ENCODE measurements at regions of chr2 and their contacts with region 1.

Region 1: DNA sequence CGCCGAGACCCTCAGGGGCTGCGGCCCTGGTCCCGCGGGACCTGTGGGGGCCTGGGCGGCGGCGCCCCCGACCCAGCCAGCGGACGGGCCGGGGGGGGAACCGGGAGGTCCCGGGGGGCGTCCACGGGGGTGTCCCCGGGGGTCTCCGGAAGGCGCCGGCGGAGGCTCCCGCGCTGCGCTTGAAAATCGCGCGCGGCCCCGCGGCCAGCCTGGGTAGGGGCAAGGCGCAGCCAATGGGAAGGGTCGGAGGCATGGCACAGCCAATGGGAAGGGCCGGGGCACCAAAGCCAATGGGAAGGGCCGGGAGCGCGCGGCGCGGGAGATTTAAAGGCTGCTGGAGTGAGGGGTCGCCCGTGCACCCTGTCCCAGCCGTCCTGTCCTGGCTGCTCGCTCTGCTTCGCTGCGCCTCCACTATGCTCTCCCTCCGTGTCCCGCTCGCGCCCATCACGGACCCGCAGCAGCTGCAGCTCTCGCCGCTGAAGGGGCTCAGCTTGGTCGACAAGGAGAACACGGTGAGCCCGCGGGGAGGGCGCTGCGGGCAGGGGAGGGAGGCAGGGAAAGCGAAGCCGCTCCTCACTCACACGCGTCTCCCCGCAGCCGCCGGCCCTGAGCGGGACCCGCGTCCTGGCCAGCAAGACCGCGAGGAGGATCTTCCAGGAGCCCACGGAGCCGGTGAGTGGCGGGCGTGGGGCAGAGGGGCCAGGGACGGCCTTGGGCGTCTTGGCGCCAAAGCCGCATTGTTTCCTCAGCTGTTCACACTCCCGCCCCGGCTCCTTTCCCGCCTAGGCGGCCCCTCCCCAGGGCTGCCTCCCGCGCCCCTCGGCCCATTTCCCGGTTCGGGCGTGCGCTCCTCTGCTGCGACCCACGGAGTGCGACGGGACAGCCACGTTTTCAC is at the start of gene RRM2:
- DNase-seq: peak; percentile 89 to 90
- ATAC-seq: peak; percentile 84 to 88
- H3K4me3 ChIP-seq: peak within 1 kb of the TSS; percentile 34 to 72 (median 60)
- H3K27ac ChIP-seq: no peak within 1 kb of the TSS
- H3K4me1 ChIP-seq: peaks cover 15 to 19% of the 10 kb centered on the region in 2 donors
- H3K27me3 ChIP-seq: peaks cover 12 to 14% (median 14%) of the 10 kb centered on the region in 3 donors
- CTCF ChIP-seq: no peak
- POLR2A ChIP-seq: no peak
- total RNA-seq, gene RRM2: 2.0 TPM in 1 of 4 donors, not detected in the others

Region 2: GRCh38 chr2:9578467-9579235 is 544.0 kb before region 1 on chr2:
- in situ Hi-C with region 1: no loop called
- intact Hi-C with region 1: no loop called
- DNase-seq: no peak
- ATAC-seq: no peak
- H3K4me3 ChIP-seq: no peak overlapping the region
- H3K27ac ChIP-seq: no peak overlapping the region
- H3K4me1 ChIP-seq: no peaks in the 10 kb centered on the region
- H3K27me3 ChIP-seq: no peaks in the 10 kb centered on the region
- CTCF ChIP-seq: no peak
- POLR2A ChIP-seq: no peak

Region 3: GRCh38 chr2:9951272-9951972 is 171.2 kb before region 1 on chr2 and contains the start of gene GRHL1:
- in situ Hi-C with region 1: no loop called
- intact Hi-C with region 1: loop called (anchors 1 kb)
- DNase-seq: peak; percentile 84 to 87
- ATAC-seq: peak; percentile 93 to 96
- H3K4me3 ChIP-seq: peak within 1 kb of the TSS; percentile 58 to 84 (median 73)
- H3K27ac ChIP-seq: peak within 1 kb of the TSS; percentile 71 to 90 (median 77)
- H3K4me1 ChIP-seq: peaks cover 0 to 5% of the 10 kb centered on the region in 2 donors
- H3K27me3 ChIP-seq: peaks cover 0 to 2% (median 0%) of the 10 kb centered on the region in 3 donors
- CTCF ChIP-seq: peak in 1 of 5 experiments; percentile 24
- POLR2A ChIP-seq: peak; percentile 39 to 60
- total RNA-seq, gene GRHL1: 0.29 to 1.0 (median 0.75) TPM

Region 4: DNA sequence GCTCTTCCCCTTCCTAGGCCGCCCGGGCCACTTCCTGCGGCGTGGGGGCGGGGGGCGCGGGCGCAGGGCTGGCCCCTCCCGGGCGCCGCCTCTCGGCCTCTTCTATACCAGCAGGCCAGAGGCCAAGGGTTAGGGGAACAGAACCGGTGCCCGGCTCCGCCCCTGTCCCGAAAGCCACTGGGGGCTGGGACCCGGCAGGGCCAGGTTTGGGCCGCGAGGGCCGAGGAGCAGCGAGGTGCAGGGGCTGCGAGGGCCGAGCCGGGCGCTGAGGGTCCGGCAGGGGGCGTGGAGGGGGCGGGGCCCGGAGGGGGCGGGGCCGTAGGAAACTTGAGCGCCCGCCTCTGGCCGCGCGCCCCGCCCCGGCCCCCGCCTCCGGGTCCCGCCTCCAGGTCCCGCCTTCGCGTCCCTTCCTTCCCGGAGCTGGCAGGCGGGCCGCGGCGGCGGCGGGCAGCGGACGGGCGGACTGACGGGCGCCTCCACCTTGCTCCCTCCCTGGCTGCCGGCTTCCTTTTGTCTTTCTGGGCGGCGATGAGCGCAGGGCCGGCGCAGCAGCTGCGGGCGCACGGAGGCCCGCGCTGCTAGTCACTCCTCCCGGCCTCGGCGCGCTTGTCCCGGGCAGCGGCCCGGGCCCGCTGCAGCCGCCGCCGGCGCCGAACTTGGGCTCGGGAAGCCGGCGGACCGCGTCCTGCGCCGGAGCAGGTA is 180.0 kb after region 1 on chr2 and contains the start of gene HPCAL1:
- in situ Hi-C with region 1: no loop called
- intact Hi-C with region 1: loop called (anchors 5 kb)
- DNase-seq: peak; percentile 63 to 73
- ATAC-seq: peak; percentile 83 to 86
- H3K4me3 ChIP-seq: peak within 1 kb of the TSS; percentile 63 to 86 (median 78)
- H3K27ac ChIP-seq: peak within 1 kb of the TSS; percentile 60 to 79 (median 75)
- H3K4me1 ChIP-seq: peaks cover 18 to 22% of the 10 kb centered on the region in 2 donors
- H3K27me3 ChIP-seq: no peaks in the 10 kb centered on the region
- CTCF ChIP-seq: peak in 4 of 5 experiments; percentile 33 to 64 (median 44)
- POLR2A ChIP-seq: peak; percentile 84 to 89
- total RNA-seq, gene HPCAL1: 29.0 to 45.5 (median 34.5) TPM

Region 5: DNA sequence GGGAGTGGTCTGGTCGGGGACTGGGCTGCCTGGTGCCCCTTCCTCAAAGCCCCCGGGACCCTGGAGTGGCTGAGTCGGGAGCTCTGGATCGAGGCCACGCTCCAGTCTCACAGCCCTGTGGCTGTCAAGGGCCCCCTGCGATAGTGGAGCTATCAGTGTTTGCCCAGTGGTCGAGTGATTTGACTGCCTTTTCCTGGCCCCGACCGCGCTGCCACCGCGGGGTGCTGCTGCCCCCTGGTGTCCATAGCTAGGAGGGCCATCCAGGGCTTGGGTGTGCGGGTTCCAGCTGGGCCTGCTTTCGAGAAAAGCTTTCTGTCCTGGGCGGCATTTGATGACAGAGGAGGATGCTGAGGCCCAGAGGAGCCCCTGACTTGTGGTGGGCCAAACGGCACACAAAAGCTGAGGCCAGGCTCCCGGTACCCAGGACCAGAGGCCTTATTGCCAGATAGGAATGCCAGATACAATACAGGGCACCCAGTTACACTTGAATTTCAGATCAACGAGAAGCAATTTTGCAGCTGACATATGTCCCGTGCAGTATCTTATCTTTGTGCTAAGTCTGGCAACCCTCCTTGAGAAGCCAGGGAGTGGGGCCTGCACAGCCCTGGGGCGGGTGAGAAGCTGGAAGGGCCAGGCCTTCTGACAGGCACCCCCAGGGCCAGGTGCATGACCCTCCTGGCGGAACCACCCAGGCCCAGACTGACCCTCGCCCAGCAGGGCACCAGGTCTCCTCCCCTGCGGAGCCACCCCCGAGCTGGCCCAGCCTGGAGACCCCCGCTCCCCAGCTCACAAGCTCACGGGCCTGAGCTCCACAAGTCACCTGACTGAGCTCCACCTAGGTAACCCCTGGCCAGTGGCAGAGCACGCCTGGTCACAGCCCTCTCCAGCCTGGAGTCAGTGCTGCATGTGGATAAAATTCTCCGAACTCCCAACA is 312.5 kb after region 1 on chr2:
- in situ Hi-C with region 1: loop called in 1 of 4 experiments (anchors 10 kb)
- intact Hi-C with region 1: loop called (anchors 1 kb)
- DNase-seq: peak; percentile 29 to 50
- ATAC-seq: peak; percentile 49 to 65
- H3K4me3 ChIP-seq: no peak overlapping the region
- H3K27ac ChIP-seq: no peak overlapping the region
- H3K4me1 ChIP-seq: peaks cover 9 to 13% of the 10 kb centered on the region in 2 donors
- H3K27me3 ChIP-seq: peaks cover 0 to 13% (median 0%) of the 10 kb centered on the region in 3 donors
- CTCF ChIP-seq: peak; percentile 80 to 98 (median 93)
- POLR2A ChIP-seq: no peak

Region 6: DNA sequence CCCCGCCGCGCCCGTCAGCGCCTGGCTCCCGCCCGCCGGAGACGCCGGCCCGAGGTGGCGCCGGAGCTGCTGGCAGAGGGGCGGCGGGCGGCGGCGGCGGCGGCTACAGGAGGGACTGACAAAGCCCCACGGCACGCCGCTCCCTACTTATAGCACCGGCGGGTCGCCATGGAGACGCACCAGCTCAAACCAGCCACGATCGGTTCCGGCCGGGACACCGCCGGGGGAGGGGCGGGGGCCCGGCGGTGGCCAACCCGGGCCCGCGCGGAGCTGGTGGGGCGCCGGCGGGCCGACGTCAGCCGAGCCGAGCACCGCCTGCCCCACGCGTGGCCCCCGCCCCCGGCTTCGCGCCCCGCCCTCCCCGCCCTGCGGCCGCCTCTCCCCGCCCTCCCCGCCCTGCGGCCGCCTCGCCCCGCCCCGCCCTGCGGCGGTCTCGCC is 325.6 kb after region 1 on chr2 and contains the start of gene ODC1:
- in situ Hi-C with region 1: no loop called
- intact Hi-C with region 1: no loop called
- DNase-seq: peak; percentile 88 to 94
- ATAC-seq: peak; percentile 69 to 77
- H3K4me3 ChIP-seq: peak within 1 kb of the TSS; percentile 67 to 90 (median 80)
- H3K27ac ChIP-seq: peak within 1 kb of the TSS; percentile 90 to 98 (median 95)
- H3K4me1 ChIP-seq: peaks cover 30 to 32% of the 10 kb centered on the region in 2 donors
- H3K27me3 ChIP-seq: no peaks in the 10 kb centered on the region
- CTCF ChIP-seq: no peak
- POLR2A ChIP-seq: peak; percentile 83 to 92
- total RNA-seq, gene ODC1: 134 to 339 (median 255) TPM

Region 7: GRCh38 chr2:10678222-10678621 is 555.6 kb after region 1 on chr2:
- in situ Hi-C with region 1: loop called (anchors 25 kb)
- intact Hi-C with region 1: loop called (anchors 10 kb)
- DNase-seq: no peak
- ATAC-seq: no peak
- H3K4me3 ChIP-seq: no peak overlapping the region
- H3K27ac ChIP-seq: no peak overlapping the region
- H3K4me1 ChIP-seq: no peaks in the 10 kb centered on the region
- H3K27me3 ChIP-seq: no peaks in the 10 kb centered on the region
- CTCF ChIP-seq: peak in 1 of 5 experiments; percentile 18
- POLR2A ChIP-seq: no peak